IMR-90 (cell line): ENCODE measurements at regions of chr2 and their contacts with region 1.

Region 1: DNA sequence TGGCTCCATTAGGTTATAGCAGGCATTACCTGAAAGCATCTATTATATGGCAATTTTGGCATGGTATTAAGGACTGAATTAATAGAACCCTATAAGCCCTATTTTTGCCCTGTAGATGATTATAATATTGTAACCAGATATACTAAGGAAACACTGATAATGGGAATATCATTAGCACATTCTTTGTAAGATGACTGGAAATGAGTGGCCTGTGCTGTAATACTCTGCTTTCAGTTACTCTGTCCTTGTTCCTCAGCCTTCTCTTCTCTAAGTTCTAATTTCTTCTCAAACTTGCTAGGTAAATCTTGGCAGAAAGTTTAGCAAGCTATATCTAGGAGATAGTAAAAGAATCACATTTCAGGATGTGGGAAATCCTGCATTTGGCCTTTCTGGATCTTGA is 74.0 kb upstream of the ITPRID2 start:
- DNase-seq: no peak
- ATAC-seq: no peak
- H3K4me3 ChIP-seq: no peak overlapping the region
- H3K27ac ChIP-seq: no peak overlapping the region
- H3K4me1 ChIP-seq: peaks cover 3% of the 10 kb centered on the region
- H3K27me3 ChIP-seq: no peaks in the 10 kb centered on the region
- CTCF ChIP-seq: no peak
- POLR2A ChIP-seq: no peak
- RAD21 ChIP-seq: no peak

Region 2: DNA sequence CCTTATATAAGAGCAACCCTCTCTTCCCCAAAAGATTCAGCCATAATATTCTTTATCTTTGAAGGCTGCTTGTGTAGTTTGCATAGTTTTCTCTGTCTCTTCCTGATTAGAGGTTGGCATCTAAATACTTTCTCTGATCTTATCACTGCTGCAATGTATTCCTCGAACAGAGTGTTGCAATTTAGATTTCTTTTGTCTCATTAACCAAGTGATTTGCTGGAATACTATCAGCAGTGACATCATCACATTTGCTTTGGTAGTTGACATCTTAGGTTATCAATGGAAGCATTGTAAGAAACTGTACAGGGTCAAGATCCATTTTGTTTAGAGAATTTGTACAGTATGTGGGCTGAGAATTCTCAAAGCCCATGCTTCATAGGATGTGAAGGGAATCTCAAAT is 65.2 kb before region 1 on chr2:
- CTCF ChIA-PET with region 1: no interaction called
- POLR2A ChIA-PET with region 1: no interaction called
- dilution Hi-C with region 1: no loop called
- in situ Hi-C with region 1: no loop called
- intact Hi-C with region 1: no loop called
- DNase-seq: peak; percentile 39
- ATAC-seq: no peak; the same call in 1 of the 2 replicates
- H3K4me3 ChIP-seq: no peak overlapping the region
- H3K27ac ChIP-seq: no peak overlapping the region
- H3K4me1 ChIP-seq: no peaks in the 10 kb centered on the region
- H3K27me3 ChIP-seq: no peaks in the 10 kb centered on the region
- CTCF ChIP-seq: no peak
- POLR2A ChIP-seq: no peak
- RAD21 ChIP-seq: no peak

Region 3: DNA sequence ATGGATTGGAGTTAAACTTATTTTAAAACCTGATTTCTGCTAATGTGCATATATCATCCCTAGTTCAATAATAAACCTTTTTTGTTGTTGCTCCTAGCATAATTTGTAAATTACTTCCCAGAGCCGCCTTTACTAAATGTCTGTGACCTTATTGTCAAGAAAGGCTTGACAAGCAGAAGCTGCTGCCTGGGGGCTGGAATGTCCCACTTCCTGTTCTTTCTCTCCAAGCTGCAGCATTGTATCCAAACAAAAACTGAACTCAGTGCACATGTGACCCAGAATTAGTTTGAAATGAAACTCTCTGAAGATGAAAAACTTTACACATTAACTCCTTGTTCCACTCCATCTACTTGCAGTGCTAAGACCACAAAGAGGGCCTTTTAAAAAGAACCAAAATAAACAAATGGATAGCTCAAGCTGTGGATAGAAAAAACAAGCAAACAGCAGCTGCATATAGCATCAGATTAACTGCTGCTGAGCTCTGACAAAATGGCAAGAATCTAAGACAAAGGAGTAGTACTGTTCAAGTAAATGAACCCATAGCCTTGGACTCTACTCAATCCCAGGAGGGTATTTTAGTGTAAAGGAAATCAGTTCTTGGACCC is 37.4 kb before region 1 on chr2:
- CTCF ChIA-PET with region 1: no interaction called
- POLR2A ChIA-PET with region 1: no interaction called
- dilution Hi-C with region 1: no loop called
- in situ Hi-C with region 1: no loop called
- intact Hi-C with region 1: no loop called
- DNase-seq: peak; percentile 54
- ATAC-seq: peak; percentile 53
- H3K4me3 ChIP-seq: no peak overlapping the region
- H3K27ac ChIP-seq: no peak overlapping the region
- H3K4me1 ChIP-seq: peaks cover 12% of the 10 kb centered on the region; the same call in 1 of the 2 replicates
- H3K27me3 ChIP-seq: no peaks in the 10 kb centered on the region
- CTCF ChIP-seq: no peak
- POLR2A ChIP-seq: no peak
- RAD21 ChIP-seq: no peak

Region 4: GRCh38 chr2:181882246-181883020 is 64.9 kb after region 1 on chr2:
- CTCF ChIA-PET with region 1: no interaction called
- POLR2A ChIA-PET with region 1: no interaction called
- dilution Hi-C with region 1: no loop called
- in situ Hi-C with region 1: no loop called
- intact Hi-C with region 1: loop called (anchors 2 kb)
- DNase-seq: no peak
- ATAC-seq: no peak
- H3K4me3 ChIP-seq: no peak overlapping the region
- H3K27ac ChIP-seq: no peak overlapping the region
- H3K4me1 ChIP-seq: peaks cover 4% of the 10 kb centered on the region; the same call in 1 of the 2 replicates
- H3K27me3 ChIP-seq: no peaks in the 10 kb centered on the region
- CTCF ChIP-seq: no peak
- POLR2A ChIP-seq: no peak
- RAD21 ChIP-seq: no peak

Region 5: DNA sequence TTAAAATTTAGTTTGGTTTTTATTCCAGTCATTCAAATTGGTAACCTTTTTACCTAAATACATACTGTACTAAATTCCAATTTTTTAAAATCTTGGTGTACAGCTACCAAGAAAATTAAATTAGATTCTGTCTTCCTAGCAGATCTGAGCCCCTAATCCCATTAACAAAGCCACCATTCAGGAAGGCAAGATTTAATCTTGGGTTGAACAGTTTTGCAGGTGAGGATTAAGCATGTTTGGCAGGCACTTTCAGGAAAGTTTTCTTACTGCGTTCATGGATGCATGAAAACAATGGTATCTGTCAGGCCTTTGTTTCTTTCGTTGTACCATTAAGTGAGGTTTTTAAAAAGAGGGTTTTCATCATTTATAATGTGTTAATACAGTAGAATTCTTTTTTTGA is 106.8 kb after region 1 on chr2:
- CTCF ChIA-PET with region 1: no interaction called
- POLR2A ChIA-PET with region 1: no interaction called
- dilution Hi-C with region 1: no loop called
- in situ Hi-C with region 1: no loop called
- intact Hi-C with region 1: no loop called
- DNase-seq: no peak
- ATAC-seq: no peak
- H3K4me3 ChIP-seq: no peak overlapping the region
- H3K27ac ChIP-seq: no peak overlapping the region
- H3K4me1 ChIP-seq: no peaks in the 10 kb centered on the region
- H3K27me3 ChIP-seq: no peaks in the 10 kb centered on the region
- CTCF ChIP-seq: no peak
- POLR2A ChIP-seq: no peak
- RAD21 ChIP-seq: no peak